Left colon (tissue), 2 donors: ENCODE measurements at regions of chr14 and their contacts with region 1.

Region 1: GRCh38 chr14:50342221-50343078 is 30.3 kb downstream of the DMAC2L start:
- DNase-seq: peak; percentile 56 to 75
- ATAC-seq: peak; percentile 88

Region 2: DNA sequence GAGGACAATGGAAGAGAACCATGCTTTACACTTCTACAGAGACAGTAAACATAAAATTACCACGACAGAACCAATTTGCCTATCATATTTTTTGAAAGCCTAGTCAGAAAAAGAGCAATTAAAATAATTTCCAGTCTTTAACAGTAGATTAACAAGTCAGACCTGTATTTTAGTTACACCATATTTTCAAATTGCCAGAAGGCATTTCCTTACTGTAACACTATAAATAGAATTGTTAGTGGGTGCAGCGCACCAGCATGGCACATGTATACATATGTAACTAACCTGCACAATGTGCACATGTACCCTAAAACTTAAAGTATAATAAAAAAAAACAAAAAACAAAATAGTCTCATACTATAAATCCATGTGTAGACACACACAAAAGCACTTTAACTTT is 127.0 kb before region 1 on chr14:
- intact Hi-C with region 1: no loop called
- DNase-seq: no peak
- ATAC-seq: no peak

Region 3: GRCh38 chr14:50396631-50397390 is 54.4 kb after region 1 on chr14 and contains the start of gene CDKL1:
- intact Hi-C with region 1: loop called in 1 of 2 experiments (anchors 10 kb)
- DNase-seq: peak; percentile 64 to 78
- ATAC-seq: peak; percentile 86
- total RNA-seq, gene CDKL1: 24.9 to 25.1 TPM